Activated CD4-positive, alpha-beta memory T cell treated with anti-CD3 and anti-CD28 coated beads, Interleukin-2, amount 10 ng/mL, durations not matched to agents 7 days and 5 days (primary cell): ENCODE measurements at regions of chr12 and their contacts with region 1.

Region 1: DNA sequence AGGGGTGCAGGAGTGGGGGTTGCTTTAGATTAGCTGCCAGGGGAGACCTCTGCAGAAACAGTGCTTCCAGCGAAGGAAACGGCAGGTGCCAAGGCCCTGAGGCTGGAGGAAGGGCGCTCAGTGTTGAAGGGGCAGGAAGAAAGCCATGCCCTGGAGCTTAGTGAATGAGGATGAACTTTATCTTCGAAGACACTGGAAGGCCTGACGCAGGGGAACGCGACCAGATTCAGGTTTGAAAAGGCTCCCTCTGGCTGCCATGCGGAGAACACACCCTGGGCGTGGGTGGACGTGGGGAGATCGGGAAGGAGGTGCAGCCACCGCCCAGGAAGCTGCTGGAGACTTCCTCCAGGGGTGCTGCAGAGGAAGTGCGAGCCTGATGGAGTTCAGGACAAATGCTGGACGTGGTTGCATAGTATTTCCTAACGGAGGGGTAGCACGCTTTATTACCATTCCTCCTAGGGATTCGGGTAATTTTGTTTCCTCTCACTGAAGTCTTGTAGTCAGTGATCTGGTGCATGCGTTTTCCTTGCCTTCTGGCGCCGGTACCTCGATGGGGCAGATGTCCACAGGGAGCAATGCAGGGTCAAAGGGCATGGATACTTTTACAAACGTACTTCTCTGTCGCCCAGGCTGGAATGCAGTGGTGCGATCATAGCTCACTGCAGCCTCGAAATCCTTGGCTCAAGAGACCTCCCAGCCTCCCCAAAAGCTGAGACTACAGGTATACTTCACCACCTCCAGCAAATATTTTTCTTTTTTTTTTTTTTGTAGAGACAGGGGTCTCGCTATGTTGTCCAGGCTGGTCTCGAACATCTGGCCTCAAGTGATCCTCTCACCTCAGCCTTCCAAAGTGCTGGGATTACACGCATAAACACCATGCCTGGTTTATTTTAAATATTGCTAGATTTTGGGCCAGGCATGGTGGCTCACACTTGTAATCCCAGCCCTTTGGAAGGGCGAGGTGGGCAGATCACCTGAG is 26.4 kb upstream of the UBC start:
- DNase-seq: peak; percentile 88
- H3K4me3 Mint-ChIP-seq: no peak overlapping the region
- H3K27ac Mint-ChIP-seq: no peak overlapping the region
- H3K4me1 Mint-ChIP-seq: peaks cover 21% of the 10 kb centered on the region
- H3K27me3 Mint-ChIP-seq: no peaks in the 10 kb centered on the region

Region 2: DNA sequence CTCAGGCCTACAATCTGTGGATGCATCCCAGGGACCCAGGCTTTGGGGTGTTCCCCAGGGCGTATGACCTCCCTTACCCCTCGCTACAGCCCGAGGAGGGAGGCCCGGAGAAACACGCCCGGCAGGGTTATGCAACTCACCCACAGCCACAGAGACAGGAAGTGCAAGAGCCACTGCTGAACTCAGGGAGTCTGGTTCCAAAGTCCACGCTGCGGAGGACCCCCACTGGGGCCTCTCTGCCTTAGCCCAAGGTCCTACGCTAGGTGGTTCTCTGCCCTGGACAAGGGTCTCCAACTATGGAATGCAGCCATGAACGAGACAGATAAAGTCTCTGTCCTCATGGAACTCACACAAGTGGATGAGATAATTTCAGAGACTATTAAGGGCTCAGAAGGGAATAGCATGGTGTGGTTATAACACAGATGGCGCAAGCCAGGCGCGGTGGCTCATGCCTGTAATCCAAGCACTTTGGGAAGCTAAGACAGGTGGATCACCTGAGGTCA is 88.5 kb before region 1 on chr12:
- CTCF ChIA-PET with region 1: no interaction called
- POLR2A ChIA-PET with region 1: no interaction called
- DNase-seq: no peak
- H3K4me3 Mint-ChIP-seq: no peak overlapping the region
- H3K27ac Mint-ChIP-seq: no peak overlapping the region
- H3K4me1 Mint-ChIP-seq: no peaks in the 10 kb centered on the region
- H3K27me3 Mint-ChIP-seq: no peaks in the 10 kb centered on the region

Region 3: DNA sequence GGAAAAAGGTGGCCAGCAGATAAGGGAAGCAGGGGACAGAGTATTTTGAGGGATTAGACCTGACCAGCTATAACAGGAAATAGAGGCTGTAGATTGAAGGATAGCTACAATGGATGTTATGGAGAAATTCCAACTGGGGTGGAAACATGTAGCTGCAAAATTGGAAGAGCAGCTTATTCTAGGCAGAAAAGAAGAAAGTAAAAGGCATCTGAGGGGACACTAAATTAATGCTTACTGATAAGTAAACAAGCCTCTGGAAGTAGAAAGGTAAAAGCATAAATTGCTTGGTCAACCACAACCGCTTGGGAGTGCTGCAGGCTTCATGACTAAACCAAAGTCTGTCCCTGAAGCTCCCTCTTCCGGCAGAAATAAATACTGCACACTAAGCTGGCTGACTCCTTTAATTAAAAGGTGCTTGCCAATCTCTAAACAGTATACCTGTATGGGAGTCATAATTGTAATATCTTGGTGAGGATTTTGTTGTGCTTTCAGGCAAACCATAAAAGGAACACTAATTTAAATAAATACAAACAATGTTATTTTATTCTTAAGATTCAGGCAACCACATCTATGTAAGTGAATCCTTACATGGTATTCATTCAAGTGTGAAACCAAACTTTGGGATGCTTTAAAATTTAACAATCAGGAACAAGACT is 34.1 kb before region 1 on chr12:
- CTCF ChIA-PET with region 1: interaction called, 105 read pairs
- POLR2A ChIA-PET with region 1: interaction called, 53 read pairs
- DNase-seq: peak; percentile 90
- H3K4me3 Mint-ChIP-seq: no peak overlapping the region
- H3K27ac Mint-ChIP-seq: no peak overlapping the region
- H3K4me1 Mint-ChIP-seq: peaks cover 33% of the 10 kb centered on the region
- H3K27me3 Mint-ChIP-seq: peaks cover 2% of the 10 kb centered on the region

Region 4: GRCh38 chr12:124917135-124917840 is 23.6 kb before region 1 on chr12:
- CTCF ChIA-PET with region 1: interaction called, 286 read pairs
- POLR2A ChIA-PET with region 1: interaction called, 462 read pairs
- DNase-seq: peak; percentile 96
- H3K4me3 Mint-ChIP-seq: peak overlapping the region; percentile 100
- H3K27ac Mint-ChIP-seq: peak overlapping the region; percentile 99
- H3K4me1 Mint-ChIP-seq: peaks cover 88% of the 10 kb centered on the region
- H3K27me3 Mint-ChIP-seq: no peaks in the 10 kb centered on the region

Region 5: GRCh38 chr12:124927201-124928094 is 13.4 kb before region 1 on chr12:
- CTCF ChIA-PET with region 1: interaction called, 286 read pairs
- POLR2A ChIA-PET with region 1: interaction called, 462 read pairs
- DNase-seq: peak; percentile 93
- H3K4me3 Mint-ChIP-seq: peak overlapping the region; percentile 83
- H3K27ac Mint-ChIP-seq: peak overlapping the region; percentile 96
- H3K4me1 Mint-ChIP-seq: peaks cover 32% of the 10 kb centered on the region
- H3K27me3 Mint-ChIP-seq: peaks cover 6% of the 10 kb centered on the region

Region 6: GRCh38 chr12:124952801-124953200 is 12.0 kb after region 1 on chr12:
- CTCF ChIA-PET with region 1: interaction called, 10 read pairs
- POLR2A ChIA-PET with region 1: interaction called, 6 read pairs
- DNase-seq: no peak
- H3K4me3 Mint-ChIP-seq: no peak overlapping the region
- H3K27ac Mint-ChIP-seq: no peak overlapping the region
- H3K4me1 Mint-ChIP-seq: no peaks in the 10 kb centered on the region
- H3K27me3 Mint-ChIP-seq: no peaks in the 10 kb centered on the region

Region 7: GRCh38 chr12:124992874-124993625 is 52.2 kb after region 1 on chr12:
- CTCF ChIA-PET with region 1: interaction called, 20 read pairs
- POLR2A ChIA-PET with region 1: interaction called, 11 read pairs
- DNase-seq: peak; percentile 89
- H3K4me3 Mint-ChIP-seq: peak overlapping the region; percentile 75
- H3K27ac Mint-ChIP-seq: peak overlapping the region; percentile 85
- H3K4me1 Mint-ChIP-seq: peaks cover 34% of the 10 kb centered on the region
- H3K27me3 Mint-ChIP-seq: no peaks in the 10 kb centered on the region

Region 8: GRCh38 chr12:125203145-125203765 is 262.4 kb after region 1 on chr12:
- CTCF ChIA-PET with region 1: no interaction called
- POLR2A ChIA-PET with region 1: no interaction called
- DNase-seq: no peak
- H3K4me3 Mint-ChIP-seq: no peak overlapping the region
- H3K27ac Mint-ChIP-seq: no peak overlapping the region
- H3K4me1 Mint-ChIP-seq: no peaks in the 10 kb centered on the region
- H3K27me3 Mint-ChIP-seq: peaks cover 23% of the 10 kb centered on the region